ENCODE measurements at regions of chr6 and their contacts with region 1.

Region 1: GRCh38 chr6:37137201-37138090 is 32.5 kb upstream of the PIM1 start:
- DNase-seq: peak in 4 of 5 donors; percentile 24 to 64 (median 28)
- H3K4me3 ChIP-seq: no peak overlapping the region
- H3K4me3 Mint-ChIP-seq: peak overlapping the region in 7 of 8 donors; percentile 44 to 71 (median 58)
- H3K27ac ChIP-seq: no peak overlapping the region
- H3K27ac Mint-ChIP-seq: peak overlapping the region in 6 of 7 donors; percentile 70 to 95 (median 78)
- H3K4me1 ChIP-seq: peaks cover 53% of the 10 kb centered on the region
- H3K4me1 Mint-ChIP-seq: peaks cover 22 to 57% (median 47%) of the 10 kb centered on the region in 4 donors
- H3K27me3 ChIP-seq: no peaks in the 10 kb centered on the region
- H3K27me3 Mint-ChIP-seq: no peaks in the 10 kb centered on the region

Region 2: DNA sequence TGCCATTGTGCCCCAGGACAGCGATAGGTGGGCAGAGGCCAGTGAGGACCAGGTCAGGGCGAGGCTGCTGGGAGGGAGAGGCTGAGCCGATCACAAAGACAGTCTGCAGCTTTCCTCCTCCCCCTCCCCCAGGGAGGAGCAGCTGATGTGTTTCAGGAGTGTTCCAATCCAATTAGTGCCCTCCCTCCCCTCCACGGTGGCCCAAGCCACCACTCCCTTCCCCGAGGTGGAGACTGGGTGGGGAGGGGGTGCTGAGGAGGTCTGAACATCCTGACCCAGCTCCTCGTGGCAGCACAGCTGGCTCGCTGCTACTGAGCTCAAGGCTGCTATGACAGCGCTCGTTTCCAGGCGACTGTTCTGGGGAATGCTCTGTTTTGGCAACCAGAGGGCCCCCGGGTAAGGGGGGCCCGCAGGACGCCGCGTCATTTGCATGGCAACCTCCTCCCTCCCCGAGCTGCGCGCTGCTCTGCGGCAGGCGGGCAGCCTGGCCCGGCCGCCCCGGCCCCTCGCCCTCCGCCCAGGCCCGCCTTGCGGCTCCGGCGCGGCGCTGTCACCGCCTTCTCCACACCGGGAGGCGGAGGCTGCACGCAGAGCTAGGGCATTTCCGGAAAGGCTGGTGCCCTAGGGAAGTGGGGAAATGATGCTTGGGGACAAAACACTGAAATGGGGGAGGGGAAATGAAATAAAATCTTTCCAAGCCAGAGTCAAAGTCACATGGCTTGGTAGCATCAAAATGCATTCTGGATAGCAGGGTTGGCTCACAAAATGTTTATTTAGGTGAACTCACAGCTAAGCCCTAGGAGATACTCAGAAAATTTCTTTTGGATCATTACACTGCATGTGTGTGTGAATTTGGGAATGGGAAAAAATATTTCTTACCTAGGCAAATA is 34.9 kb before region 1 on chr6:
- CTCF ChIA-PET with region 1: no interaction called
- POLR2A ChIA-PET with region 1: interaction called, 12 read pairs
- intact Hi-C with region 1: no loop called
- DNase-seq: peak; percentile 79 to 86 (median 84)
- H3K4me3 ChIP-seq: peak overlapping the region; percentile 19 to 27
- H3K4me3 Mint-ChIP-seq: peak overlapping the region; percentile 68 to 85 (median 80)
- H3K27ac ChIP-seq: peak overlapping the region; percentile 65
- H3K27ac Mint-ChIP-seq: peak overlapping the region; percentile 80 to 96 (median 94)
- H3K4me1 ChIP-seq: peaks cover 22% of the 10 kb centered on the region
- H3K4me1 Mint-ChIP-seq: peaks cover 15 to 36% (median 27%) of the 10 kb centered on the region in 4 donors
- H3K27me3 ChIP-seq: no peaks in the 10 kb centered on the region
- H3K27me3 Mint-ChIP-seq: no peaks in the 10 kb centered on the region

Region 3: GRCh38 chr6:37381579-37381978 is 244.1 kb after region 1 on chr6:
- CTCF ChIA-PET with region 1: no interaction called
- POLR2A ChIA-PET with region 1: no interaction called
- intact Hi-C with region 1: no loop called
- DNase-seq: peak; percentile 41 to 55 (median 45)
- H3K4me3 ChIP-seq: no peak overlapping the region
- H3K4me3 Mint-ChIP-seq: no peak overlapping the region
- H3K27ac ChIP-seq: no peak overlapping the region
- H3K27ac Mint-ChIP-seq: peak overlapping the region in 2 of 7 donors; percentile 25 to 33
- H3K4me1 ChIP-seq: no peaks in the 10 kb centered on the region
- H3K4me1 Mint-ChIP-seq: peaks cover 0 to 2% (median 0%) of the 10 kb centered on the region in 4 donors
- H3K27me3 ChIP-seq: no peaks in the 10 kb centered on the region
- H3K27me3 Mint-ChIP-seq: no peaks in the 10 kb centered on the region

Region 4: GRCh38 chr6:37804586-37804985 is 667.1 kb after region 1 on chr6:
- CTCF ChIA-PET with region 1: no interaction called
- POLR2A ChIA-PET with region 1: no interaction called
- intact Hi-C with region 1: no loop called
- DNase-seq: no peak
- H3K4me3 ChIP-seq: no peak overlapping the region
- H3K4me3 Mint-ChIP-seq: no peak overlapping the region
- H3K27ac ChIP-seq: no peak overlapping the region
- H3K27ac Mint-ChIP-seq: no peak overlapping the region
- H3K4me1 ChIP-seq: no peaks in the 10 kb centered on the region
- H3K4me1 Mint-ChIP-seq: peaks cover 0 to 6% (median 1%) of the 10 kb centered on the region in 4 donors
- H3K27me3 ChIP-seq: no peaks in the 10 kb centered on the region
- H3K27me3 Mint-ChIP-seq: peaks cover 6 to 8% of the 10 kb centered on the region in 2 donors

Measured in CD4-positive, alpha-beta memory T cell (primary cell).